Activated CD4-positive, alpha-beta T cell treated with anti-CD3 and anti-CD28 coated beads for 36 hours (primary cell): ENCODE measurements at regions of chr1 and their contacts with region 1.

Region 1: DNA sequence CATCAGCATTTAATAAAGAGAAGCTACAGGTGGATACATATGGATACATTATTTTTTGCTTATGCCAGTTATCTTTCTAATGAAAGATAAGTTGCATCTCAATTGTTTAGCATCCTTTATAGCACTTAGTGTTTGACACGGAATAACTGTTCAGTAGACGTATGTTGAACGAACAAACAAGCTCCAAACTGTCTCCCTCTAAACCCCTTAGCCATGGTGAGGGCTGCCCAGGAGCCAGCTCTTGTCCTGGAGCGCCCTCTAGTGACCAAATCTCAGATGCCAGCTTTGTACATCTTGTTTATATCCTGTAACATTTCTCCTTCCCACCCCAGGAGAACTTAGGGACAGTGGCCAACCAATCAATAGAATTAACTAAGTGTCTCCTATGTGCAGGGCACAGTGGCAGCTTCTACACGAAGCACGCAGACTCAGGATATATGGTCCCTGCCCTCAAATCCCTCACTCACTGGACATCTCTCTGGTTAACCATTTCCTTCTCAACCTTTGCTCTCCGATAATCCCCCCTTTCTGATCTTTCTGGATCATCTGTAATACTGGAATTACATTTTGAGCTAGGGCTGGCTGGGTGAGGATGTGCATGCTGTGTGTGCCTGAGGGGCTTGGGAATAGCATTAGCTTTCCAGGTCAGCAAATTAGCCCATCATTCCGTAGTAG is 22.9 kb downstream of the KCNA10 start:
- DNase-seq: peak; percentile 90
- ATAC-seq: peak; percentile 92
- H3K4me3 Mint-ChIP-seq: no peak overlapping the region
- H3K27ac Mint-ChIP-seq: no peak overlapping the region
- H3K4me1 Mint-ChIP-seq: no peaks in the 10 kb centered on the region
- H3K27me3 Mint-ChIP-seq: peaks cover 3% of the 10 kb centered on the region

Region 2: DNA sequence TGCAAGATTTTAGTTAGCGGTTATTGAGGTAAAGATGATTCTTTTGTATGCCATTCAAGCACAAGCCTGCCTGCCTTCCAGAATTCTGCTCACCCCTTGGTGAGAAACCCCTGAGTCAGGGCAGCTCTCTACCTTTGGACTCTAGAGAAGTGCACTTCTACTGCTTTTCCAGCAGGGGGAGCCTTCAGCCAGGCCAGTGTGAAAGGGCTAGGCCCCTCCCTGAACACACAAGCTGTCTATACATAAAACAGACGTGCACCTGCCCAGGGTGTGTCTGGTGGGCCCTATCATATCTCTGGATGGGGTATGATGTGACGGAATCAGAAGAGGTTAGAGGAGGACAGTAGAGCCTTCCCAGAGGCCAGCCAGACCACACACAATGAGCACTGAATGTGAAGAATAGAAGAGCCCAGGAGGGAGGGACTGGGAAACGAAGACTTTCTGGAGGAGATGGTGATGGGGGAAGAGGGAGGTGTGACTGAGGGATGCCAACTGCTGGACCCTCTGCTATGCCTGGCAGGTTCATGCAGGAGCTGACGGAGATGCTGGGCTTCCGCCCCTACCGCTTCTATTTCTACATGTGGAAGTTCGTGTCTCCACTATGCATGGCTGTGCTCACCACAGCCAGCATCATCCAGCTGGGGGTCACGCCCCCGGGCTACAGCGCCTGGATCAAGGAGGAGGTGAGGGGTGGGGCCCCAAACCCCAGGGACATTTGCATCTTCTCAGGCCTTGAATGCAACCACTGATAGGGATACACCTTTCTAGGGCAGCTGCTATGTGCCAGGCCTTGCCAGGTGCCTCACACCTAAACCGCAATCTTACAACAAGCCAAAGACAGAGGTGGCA is 298.9 kb before region 1 on chr1:
- CTCF ChIA-PET with region 1: interaction called, 121 read pairs
- POLR2A ChIA-PET with region 1: no interaction called
- intact Hi-C with region 1: loop called (anchors 1 kb)
- DNase-seq: peak; percentile 77
- ATAC-seq: peak; percentile 97
- H3K4me3 Mint-ChIP-seq: no peak overlapping the region
- H3K27ac Mint-ChIP-seq: no peak overlapping the region
- H3K4me1 Mint-ChIP-seq: no peaks in the 10 kb centered on the region
- H3K27me3 Mint-ChIP-seq: no peaks in the 10 kb centered on the region

Region 3: GRCh38 chr1:110235834-110236682 is 260.0 kb before region 1 on chr1:
- CTCF ChIA-PET with region 1: no interaction called
- POLR2A ChIA-PET with region 1: no interaction called
- intact Hi-C with region 1: no loop called
- DNase-seq: peak; percentile 85
- ATAC-seq: peak; percentile 90
- H3K4me3 Mint-ChIP-seq: peak overlapping the region; percentile 42
- H3K27ac Mint-ChIP-seq: peak overlapping the region; percentile 95
- H3K4me1 Mint-ChIP-seq: peaks cover 57% of the 10 kb centered on the region
- H3K27me3 Mint-ChIP-seq: no peaks in the 10 kb centered on the region

Region 4: GRCh38 chr1:110312188-110313121 is 183.6 kb before region 1 on chr1:
- CTCF ChIA-PET with region 1: interaction called, 9 read pairs
- POLR2A ChIA-PET with region 1: no interaction called
- intact Hi-C with region 1: loop called in 1 of 2 experiments (anchors 5 kb)
- DNase-seq: peak; percentile 86
- ATAC-seq: peak; percentile 98
- H3K4me3 Mint-ChIP-seq: no peak overlapping the region
- H3K27ac Mint-ChIP-seq: no peak overlapping the region
- H3K4me1 Mint-ChIP-seq: no peaks in the 10 kb centered on the region
- H3K27me3 Mint-ChIP-seq: no peaks in the 10 kb centered on the region

Region 5: GRCh38 chr1:110375490-110375889 is 120.6 kb before region 1 on chr1:
- CTCF ChIA-PET with region 1: no interaction called
- POLR2A ChIA-PET with region 1: no interaction called
- intact Hi-C with region 1: no loop called
- DNase-seq: no peak
- ATAC-seq: no peak
- H3K4me3 Mint-ChIP-seq: no peak overlapping the region
- H3K27ac Mint-ChIP-seq: no peak overlapping the region
- H3K4me1 Mint-ChIP-seq: peaks cover 9% of the 10 kb centered on the region
- H3K27me3 Mint-ChIP-seq: no peaks in the 10 kb centered on the region

Region 6: GRCh38 chr1:110433803-110434202 is 62.3 kb before region 1 on chr1:
- CTCF ChIA-PET with region 1: interaction called, 10 read pairs
- POLR2A ChIA-PET with region 1: no interaction called
- intact Hi-C with region 1: no loop called
- DNase-seq: peak; percentile 7
- ATAC-seq: no peak
- H3K4me3 Mint-ChIP-seq: no peak overlapping the region
- H3K27ac Mint-ChIP-seq: no peak overlapping the region
- H3K4me1 Mint-ChIP-seq: no peaks in the 10 kb centered on the region
- H3K27me3 Mint-ChIP-seq: peaks cover 3% of the 10 kb centered on the region

Region 7: DNA sequence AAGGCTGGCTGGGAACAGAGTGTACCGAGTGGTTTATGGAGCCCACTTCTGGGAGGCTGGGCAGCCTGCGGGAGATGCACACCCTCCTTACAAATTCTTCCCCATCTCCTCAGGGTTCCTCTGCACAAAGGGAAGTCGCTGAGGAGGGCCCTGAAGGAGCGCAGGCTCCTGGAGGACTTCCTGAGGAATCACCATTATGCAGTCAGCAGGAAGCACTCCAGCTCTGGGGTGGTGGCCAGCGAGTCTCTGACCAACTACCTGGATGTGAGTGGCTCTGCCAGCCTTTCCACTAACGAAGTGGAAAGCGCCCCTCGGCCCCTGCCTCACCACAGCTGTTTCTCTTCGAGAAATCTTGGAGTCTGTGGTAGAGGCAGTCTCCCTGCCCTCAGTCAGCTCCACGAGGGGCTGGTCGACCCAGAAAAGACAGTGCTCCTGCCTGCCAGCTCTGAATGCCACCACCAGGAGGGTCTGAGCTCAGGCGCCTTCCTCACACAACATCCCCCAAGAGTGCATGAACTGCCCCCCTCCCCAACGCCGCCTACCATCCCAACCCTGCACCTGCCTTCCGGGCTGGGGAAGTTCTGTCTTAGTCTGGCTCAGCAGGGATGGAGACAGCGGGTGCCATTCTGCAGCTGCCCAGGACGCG is 13.3 kb before region 1 on chr1:
- CTCF ChIA-PET with region 1: interaction called, 28 read pairs
- POLR2A ChIA-PET with region 1: no interaction called
- intact Hi-C with region 1: loop called in 1 of 2 experiments (anchors 1 kb)
- DNase-seq: no peak
- ATAC-seq: no peak
- H3K4me3 Mint-ChIP-seq: no peak overlapping the region
- H3K27ac Mint-ChIP-seq: no peak overlapping the region
- H3K4me1 Mint-ChIP-seq: peaks cover 4% of the 10 kb centered on the region
- H3K27me3 Mint-ChIP-seq: peaks cover 6% of the 10 kb centered on the region

Region 8: DNA sequence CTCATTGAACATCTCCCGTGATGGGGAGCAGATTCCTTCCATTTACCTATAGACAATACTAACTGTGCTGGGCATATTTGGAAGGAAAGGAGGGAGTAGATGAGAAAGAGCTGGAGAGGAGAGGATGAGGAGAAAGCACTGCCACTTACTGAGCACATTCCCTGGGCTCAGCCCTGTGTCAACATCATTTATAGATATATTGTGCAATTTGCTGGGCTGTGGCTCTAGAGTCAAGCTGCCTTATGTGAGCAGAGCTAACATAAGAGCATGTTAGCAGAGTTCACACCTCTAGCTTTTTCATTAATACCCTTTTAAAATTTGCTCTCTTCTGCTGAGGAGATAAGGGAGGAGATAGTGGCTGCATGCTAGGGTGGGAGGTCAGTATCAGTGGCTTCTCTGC is 354.6 kb after region 1 on chr1:
- CTCF ChIA-PET with region 1: no interaction called
- POLR2A ChIA-PET with region 1: no interaction called
- intact Hi-C with region 1: no loop called
- DNase-seq: no peak
- ATAC-seq: no peak
- H3K4me3 Mint-ChIP-seq: no peak overlapping the region
- H3K27ac Mint-ChIP-seq: no peak overlapping the region
- H3K4me1 Mint-ChIP-seq: peaks cover 5% of the 10 kb centered on the region
- H3K27me3 Mint-ChIP-seq: no peaks in the 10 kb centered on the region